ENCODE measurements at regions of chr17 and their contacts with region 1.

Region 1: DNA sequence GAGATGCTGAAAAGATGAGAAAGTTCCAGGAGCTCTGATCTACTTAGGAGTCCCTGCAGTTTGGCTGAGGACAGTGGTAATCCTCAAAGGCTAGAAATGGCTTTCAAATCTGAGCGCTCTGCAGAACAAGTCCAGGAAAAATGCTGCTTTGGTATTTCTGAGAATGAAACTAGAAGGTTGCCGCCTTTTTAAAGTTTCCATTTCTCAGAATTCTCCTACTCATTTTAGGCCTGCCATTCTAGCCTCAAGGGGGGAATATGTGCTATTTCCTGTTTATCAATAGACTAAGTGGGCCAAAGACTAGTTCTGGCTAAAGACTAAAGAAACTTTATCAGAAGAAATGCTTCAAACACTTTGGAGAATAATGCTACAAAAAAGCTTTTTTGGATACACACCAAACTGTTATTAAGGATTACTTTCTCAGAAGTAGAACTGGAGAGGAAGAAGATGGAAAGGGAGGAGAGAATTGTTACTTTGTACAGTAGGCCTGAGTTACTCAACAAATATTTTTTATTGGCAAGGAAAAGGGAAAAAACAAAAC is at the start of gene SLFN12L:
- DNase-seq: no peak
- H3K4me3 ChIP-seq: no peak within 1 kb of the TSS
- H3K27ac ChIP-seq: no peak within 1 kb of the TSS
- H3K4me1 ChIP-seq: no peaks in the 10 kb centered on the region
- H3K27me3 ChIP-seq: no peaks in the 10 kb centered on the region
- total RNA-seq, gene SLFN12L: 0.11 TPM in 1 of 2 replicates, not detected in the other

Region 2: DNA sequence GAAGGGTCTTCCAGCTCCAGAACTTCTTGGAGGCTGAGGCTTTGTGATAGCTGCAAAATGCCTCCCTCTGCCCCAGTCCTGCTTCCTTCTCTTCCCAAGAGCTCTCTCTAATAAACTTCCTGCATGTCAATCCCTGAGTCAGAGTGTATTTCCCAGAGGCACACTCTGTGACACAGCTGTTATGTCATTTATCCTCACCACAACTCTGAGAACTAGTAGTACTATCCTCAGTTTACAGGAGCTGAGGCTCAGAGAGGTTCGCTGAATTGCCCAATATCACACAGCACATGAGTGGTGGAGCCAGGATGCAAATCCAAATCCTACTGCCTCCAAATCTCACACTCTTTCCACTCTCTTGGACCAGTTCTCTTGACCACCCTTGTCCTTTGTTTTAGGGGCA is 370.0 kb before region 1 on chr17:
- in situ Hi-C with region 1: loop called (anchors 5 kb)
- DNase-seq: peak; percentile 54
- H3K4me3 ChIP-seq: no peak overlapping the region
- H3K27ac ChIP-seq: no peak overlapping the region
- H3K4me1 ChIP-seq: peaks cover 8% of the 10 kb centered on the region
- H3K27me3 ChIP-seq: no peaks in the 10 kb centered on the region

Region 3: DNA sequence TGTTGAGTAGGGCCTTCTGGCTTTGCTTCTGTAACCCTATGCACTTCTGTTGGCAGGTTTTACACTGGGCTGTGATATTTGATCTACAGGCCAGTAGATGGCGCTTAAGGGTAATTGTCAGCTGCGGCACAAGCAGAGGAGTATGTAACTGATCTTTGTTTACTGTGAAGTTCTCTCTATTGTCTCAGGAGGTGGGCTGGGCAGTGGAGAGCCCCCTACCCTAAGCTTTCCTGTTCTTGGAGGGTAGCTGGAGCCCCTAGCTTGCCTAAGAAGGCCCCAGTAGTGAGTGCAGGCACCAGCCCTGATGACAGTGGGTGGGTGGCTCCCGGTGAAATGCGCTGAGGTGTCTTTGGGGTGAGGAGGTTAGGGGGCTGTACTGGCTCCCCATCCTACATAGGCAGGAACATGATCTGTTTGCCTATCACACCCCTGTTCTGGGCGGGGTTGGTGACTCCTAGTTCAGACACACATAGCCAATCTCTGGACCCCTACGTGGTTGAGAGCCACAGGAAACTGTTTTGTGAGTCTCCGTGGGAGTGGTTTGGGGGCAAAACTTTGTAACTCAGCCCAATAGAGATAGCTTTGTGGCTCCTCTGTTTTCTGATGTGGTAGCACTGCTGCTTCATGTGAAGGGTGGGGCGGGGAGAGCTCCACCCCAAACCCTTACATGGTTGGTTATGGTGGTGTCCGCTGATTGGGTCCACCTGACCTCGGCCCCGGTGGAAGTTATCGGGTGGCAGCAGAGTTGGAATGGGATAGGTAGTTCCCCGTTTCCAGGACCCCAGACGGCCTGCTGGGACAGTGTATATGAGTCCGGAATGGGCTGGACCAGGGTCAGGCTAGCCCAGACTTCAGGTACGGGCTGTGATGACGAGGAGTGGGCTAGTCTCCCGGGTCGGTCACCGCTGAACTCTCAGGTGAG is 224.6 kb before region 1 on chr17:
- in situ Hi-C with region 1: loop called (anchors 5 kb)
- DNase-seq: peak; percentile 77
- H3K4me3 ChIP-seq: peak overlapping the region; percentile 62
- H3K27ac ChIP-seq: no peak overlapping the region
- H3K4me1 ChIP-seq: peaks cover 15% of the 10 kb centered on the region
- H3K27me3 ChIP-seq: no peaks in the 10 kb centered on the region